Posterior cingulate gyrus (tissue), 11 donors: ENCODE measurements at regions of chr2 and their contacts with region 1.

Region 1: GRCh38 chr2:71510196-71510807 is 56.9 kb downstream of the DYSF start:
- DNase-seq: peak; percentile 46 to 95 (median 79)

Region 2: GRCh38 chr2:71157124-71157793 is 353.0 kb before region 1 on chr2:
- intact Hi-C with region 1: loop called (anchors 1 kb)
- DNase-seq: peak in 9 of 10 donors; percentile 17 to 94 (median 75)

Region 3: DNA sequence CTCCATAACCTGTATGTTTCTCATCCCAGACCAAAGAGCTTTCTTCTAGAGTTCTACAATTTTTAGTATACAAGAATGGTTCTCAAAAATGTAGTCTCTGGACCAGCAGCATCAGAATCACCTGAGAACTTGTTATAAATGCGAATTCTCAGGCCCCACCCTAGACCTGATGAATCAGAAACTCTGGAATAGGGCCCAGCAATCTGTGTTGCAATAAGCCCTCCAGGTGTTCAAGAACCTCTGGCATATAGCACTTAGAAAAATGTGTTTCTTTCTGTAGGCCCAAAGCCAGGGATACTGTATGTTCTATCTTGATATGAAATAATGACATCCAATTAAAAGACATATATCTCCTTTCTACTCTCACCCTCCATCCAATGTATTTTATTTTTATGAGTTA is 293.8 kb before region 1 on chr2:
- intact Hi-C with region 1: no loop called
- DNase-seq: no peak

Region 4: DNA sequence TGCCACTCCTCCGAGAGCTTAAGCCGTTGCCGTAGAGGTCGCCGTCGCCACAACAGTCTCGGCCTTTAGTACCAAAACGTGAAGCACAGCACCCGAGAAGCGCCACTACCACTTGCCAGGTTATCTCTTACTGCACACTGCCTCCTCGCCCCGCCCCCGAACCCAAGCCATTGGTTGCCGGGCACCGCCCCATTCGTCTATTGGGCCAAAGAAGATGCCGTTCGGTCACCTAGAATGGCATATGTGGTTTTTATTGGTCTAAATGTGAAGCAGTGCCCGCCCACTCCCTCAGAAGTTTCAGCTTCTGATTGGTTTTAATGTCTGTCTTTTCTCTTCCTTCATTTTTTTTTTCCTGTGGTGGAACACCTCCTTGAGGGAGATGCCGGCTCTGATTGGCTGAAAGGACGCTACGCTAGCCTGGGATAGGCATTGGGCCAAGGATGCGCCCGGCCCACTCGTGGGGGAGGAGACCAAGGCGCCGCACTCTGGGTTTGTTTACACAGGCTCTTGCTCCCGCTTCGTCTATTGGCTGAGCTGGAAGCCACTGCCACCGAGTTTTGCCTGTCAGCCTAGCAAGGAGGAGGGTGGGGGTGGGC is 283.2 kb before region 1 on chr2 and contains the start of gene PAIP2B:
- intact Hi-C with region 1: loop called (anchors 1 kb)
- DNase-seq: peak; percentile 98 to 100 (median 99)

Region 5: DNA sequence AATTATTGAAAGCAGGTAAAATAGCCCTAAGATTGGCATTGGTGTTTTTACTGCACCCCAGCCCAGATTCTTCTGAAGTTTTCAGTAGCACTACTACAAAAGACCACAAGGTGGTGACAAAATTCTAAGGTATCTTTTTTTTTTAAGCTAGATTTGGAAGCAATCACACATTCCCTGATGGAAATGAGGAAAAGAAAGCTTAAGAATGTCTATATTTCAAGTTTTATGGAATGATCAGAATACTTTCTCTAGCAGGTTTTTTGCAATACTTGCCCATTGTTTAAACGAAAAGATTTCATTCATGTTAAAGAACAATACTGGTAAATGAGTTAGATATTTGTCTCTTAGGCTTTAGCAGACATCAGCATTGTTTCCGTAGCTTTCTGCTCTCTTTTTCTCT is 210.8 kb before region 1 on chr2:
- intact Hi-C with region 1: loop called (anchors 1 kb)
- DNase-seq: no peak

Region 6: DNA sequence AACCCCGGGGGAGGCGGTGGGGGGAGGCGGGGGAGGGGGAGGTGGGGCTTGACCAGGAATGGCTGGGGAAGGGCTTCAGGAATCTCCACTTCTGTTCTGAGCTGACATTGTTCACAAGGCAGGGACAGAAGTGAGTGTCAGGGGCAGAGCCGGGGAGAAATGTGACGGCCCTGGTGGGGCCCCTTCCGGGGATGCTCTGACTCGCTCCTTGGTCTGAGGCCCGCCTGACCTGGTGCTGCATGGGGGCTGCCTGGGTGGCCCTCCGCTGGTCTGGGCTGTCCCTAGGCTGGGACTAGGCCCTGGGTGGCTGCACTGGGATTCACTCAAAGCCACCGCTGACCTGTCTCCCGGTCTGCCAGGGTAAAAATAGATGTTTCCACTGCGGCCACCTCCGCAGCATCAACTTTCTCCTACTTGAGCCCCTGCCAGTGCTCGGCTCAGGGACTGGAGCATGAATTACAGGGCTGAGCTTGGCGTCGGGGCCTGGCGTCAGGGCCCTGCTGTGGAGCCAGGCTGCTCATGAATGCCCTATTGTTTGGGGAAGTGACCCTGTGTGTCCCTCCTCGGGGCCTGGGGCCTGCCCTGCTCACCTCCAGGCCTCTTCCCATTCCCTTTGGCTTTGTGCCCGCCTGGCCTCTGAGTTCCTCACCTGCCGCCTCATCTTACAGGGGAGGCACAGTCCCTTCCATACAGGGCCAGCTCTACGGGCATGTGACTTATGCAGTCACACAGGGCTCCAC is 190.5 kb after region 1 on chr2:
- intact Hi-C with region 1: no loop called
- DNase-seq: peak; percentile 41 to 96 (median 73)

Region 7: GRCh38 chr2:73071360-73072133 is 1561.2 kb after region 1 on chr2 and contains the start of gene SFXN5:
- intact Hi-C with region 1: no loop called
- DNase-seq: peak; percentile 97 to 100 (median 99)